SK-N-SH (cell line): ENCODE measurements at regions of chr11 and their contacts with region 1.

Region 1: DNA sequence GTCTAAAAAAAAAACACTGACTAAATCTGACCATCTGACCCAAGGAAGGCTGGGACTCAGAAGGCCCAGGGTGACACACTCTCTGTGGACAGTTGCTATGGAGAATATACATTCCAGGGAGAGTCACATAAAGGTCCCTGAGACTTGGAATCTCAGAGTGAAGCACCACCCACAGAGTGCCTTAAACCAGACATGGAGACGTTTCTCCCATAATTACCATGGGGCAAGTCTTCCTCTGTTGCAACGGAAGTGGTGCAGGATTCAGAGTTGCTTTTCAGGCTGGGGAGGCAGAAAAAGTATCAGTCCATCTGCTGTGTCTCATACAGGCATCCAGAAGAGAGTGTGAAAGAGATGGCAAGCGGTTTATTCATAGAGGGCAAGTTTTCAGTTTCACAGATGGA is 58.7 kb upstream of the SLN start:
- DNase-seq: no peak
- H3K4me3 ChIP-seq: no peak overlapping the region
- H3K27ac ChIP-seq: peak overlapping the region in 1 of 2 experiments; percentile 70; a peak in 2 of 4 replicates
- H3K4me1 ChIP-seq: 0 out of 4 replicates have a peak, but pooled peaks cover 0 to 5% of the 10 kb centered on the region in 2 experiments
- H3K27me3 ChIP-seq: no peaks in the 10 kb centered on the region
- CTCF ChIP-seq: no peak
- EP300 ChIP-seq: no peak
- RAD21 ChIP-seq: no peak

Region 2: GRCh38 chr11:107565219-107565937 is 205.2 kb before region 1 on chr11 and contains the start of gene ALKBH8:
- CTCF ChIA-PET with region 1: interaction called, 19 read pairs
- POLR2A ChIA-PET with region 1: no interaction called
- DNase-seq: peak; percentile 73
- H3K4me3 ChIP-seq: peak within 1 kb of the TSS; percentile 86 to 95
- H3K27ac ChIP-seq: peak within 1 kb of the TSS; percentile 73 to 87
- H3K4me1 ChIP-seq: peaks cover 31 to 46% of the 10 kb centered on the region in 2 experiments
- H3K27me3 ChIP-seq: no peaks in the 10 kb centered on the region
- CTCF ChIP-seq: no peak
- EP300 ChIP-seq: no peak
- RAD21 ChIP-seq: no peak
- polyA plus RNA-seq, gene ALKBH8: 2.4 and 3.5 TPM in 2 replicates

Region 3: DNA sequence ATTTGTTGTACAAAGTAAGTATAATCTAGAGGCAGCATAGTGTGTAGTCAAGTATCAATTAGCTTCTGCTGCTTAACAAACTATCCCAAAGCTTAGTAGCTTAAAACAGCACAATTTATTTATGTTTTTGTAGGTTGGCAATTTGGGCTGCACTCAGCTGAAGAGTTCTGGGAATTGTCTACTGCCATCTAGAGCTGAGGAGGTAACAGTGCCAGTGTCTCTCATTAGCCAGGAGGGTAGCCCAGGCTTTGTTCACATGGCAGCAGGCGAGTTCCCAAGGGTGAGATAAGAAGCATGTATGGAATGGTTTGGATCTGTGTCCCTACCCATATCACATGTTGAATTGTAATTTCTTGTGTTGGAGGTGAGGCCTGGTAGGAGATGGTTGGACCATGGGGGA is 12.9 kb before region 1 on chr11:
- CTCF ChIA-PET with region 1: interaction called, 13 read pairs
- POLR2A ChIA-PET with region 1: no interaction called
- DNase-seq: no peak
- H3K4me3 ChIP-seq: no peak overlapping the region
- H3K27ac ChIP-seq: no peak overlapping the region
- H3K4me1 ChIP-seq: no peaks in the 10 kb centered on the region
- H3K27me3 ChIP-seq: no peaks in the 10 kb centered on the region
- CTCF ChIP-seq: no peak; the same call in 1 of the 2 replicates
- EP300 ChIP-seq: no peak
- RAD21 ChIP-seq: no peak